AG04450 (cell line): ENCODE measurements at regions of chr17 and their contacts with region 1.

Region 1: GRCh38 chr17:35312790-35313711 is 60.4 kb downstream of the SLFN11 start:
- DNase-seq: peak; percentile 56
- H3K4me3 ChIP-seq: peak overlapping the region; percentile 40
- H3K27ac ChIP-seq: no peak overlapping the region
- H3K27me3 ChIP-seq: no peaks in the 10 kb centered on the region
- CTCF ChIP-seq: peak; percentile 82

Region 2: GRCh38 chr17:35299129-35299528 is 13.9 kb before region 1 on chr17:
- CTCF ChIA-PET with region 1: interaction called, 14 read pairs
- POLR2A ChIA-PET with region 1: no interaction called
- DNase-seq: no peak
- H3K4me3 ChIP-seq: no peak overlapping the region
- H3K27ac ChIP-seq: no peak overlapping the region
- H3K27me3 ChIP-seq: no peaks in the 10 kb centered on the region
- CTCF ChIP-seq: no peak

Region 3: GRCh38 chr17:35337364-35337763 is 24.3 kb after region 1 on chr17:
- CTCF ChIA-PET with region 1: interaction called, 11 read pairs
- POLR2A ChIA-PET with region 1: no interaction called
- DNase-seq: no peak
- H3K4me3 ChIP-seq: no peak overlapping the region
- H3K27ac ChIP-seq: no peak overlapping the region
- H3K27me3 ChIP-seq: peaks cover 8% of the 10 kb centered on the region
- CTCF ChIP-seq: no peak

Region 4: GRCh38 chr17:35352284-35352683 is 39.2 kb after region 1 on chr17:
- CTCF ChIA-PET with region 1: interaction called, 13 read pairs
- POLR2A ChIA-PET with region 1: no interaction called
- DNase-seq: no peak
- H3K4me3 ChIP-seq: no peak overlapping the region
- H3K27ac ChIP-seq: no peak overlapping the region
- H3K27me3 ChIP-seq: no peaks in the 10 kb centered on the region
- CTCF ChIP-seq: no peak

Region 5: DNA sequence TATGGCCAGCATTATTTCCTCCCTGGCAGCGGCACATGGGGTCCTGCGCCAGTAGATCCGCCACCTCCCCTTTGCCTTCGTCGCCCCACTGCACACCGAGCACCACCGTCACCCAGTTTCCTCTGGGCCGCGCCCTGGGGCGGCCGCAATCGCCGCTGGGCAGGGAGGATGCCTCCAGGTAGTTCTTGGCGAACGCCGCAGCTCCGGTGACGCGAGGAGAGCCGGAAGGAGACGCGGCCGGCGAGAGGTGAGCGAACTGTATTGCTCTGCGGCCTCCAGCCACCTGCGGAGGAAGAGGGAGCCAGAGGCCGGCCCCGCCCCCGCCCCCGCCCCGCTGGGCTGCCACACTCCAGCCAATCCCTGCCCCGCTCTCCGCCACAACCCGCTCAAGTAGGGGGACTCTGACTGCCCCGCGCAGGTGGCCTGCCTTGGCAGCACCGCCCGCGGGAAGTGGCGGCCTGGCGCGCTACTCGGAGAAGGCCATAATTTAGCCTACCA is 147.4 kb after region 1 on chr17:
- CTCF ChIA-PET with region 1: no interaction called
- POLR2A ChIA-PET with region 1: no interaction called
- DNase-seq: no peak
- H3K4me3 ChIP-seq: no peak overlapping the region
- H3K27ac ChIP-seq: no peak overlapping the region
- H3K27me3 ChIP-seq: peaks cover 30% of the 10 kb centered on the region
- CTCF ChIP-seq: no peak

Region 6: GRCh38 chr17:35529866-35530265 is 216.8 kb after region 1 on chr17:
- CTCF ChIA-PET with region 1: interaction called, 306 read pairs
- POLR2A ChIA-PET with region 1: no interaction called
- DNase-seq: no peak
- H3K4me3 ChIP-seq: no peak overlapping the region
- H3K27ac ChIP-seq: no peak overlapping the region
- H3K27me3 ChIP-seq: peaks cover 6% of the 10 kb centered on the region
- CTCF ChIP-seq: no peak

Region 7: GRCh38 chr17:35540589-35541404 is 227.7 kb after region 1 on chr17:
- CTCF ChIA-PET with region 1: interaction called, 306 read pairs
- POLR2A ChIA-PET with region 1: no interaction called
- DNase-seq: no peak
- H3K4me3 ChIP-seq: peak overlapping the region; percentile 37
- H3K27ac ChIP-seq: no peak overlapping the region
- H3K27me3 ChIP-seq: no peaks in the 10 kb centered on the region
- CTCF ChIP-seq: 0 out of 2 replicates have a peak, but pooled peaks have one; percentile 8

Region 8: GRCh38 chr17:35630530-35631148 is 317.6 kb after region 1 on chr17:
- CTCF ChIA-PET with region 1: no interaction called
- POLR2A ChIA-PET with region 1: no interaction called
- DNase-seq: no peak
- H3K4me3 ChIP-seq: no peak overlapping the region
- H3K27ac ChIP-seq: no peak overlapping the region
- H3K27me3 ChIP-seq: no peaks in the 10 kb centered on the region
- CTCF ChIP-seq: no peak